Colonic mucosa (tissue), 4 donors: ENCODE measurements at regions of chr17 and their contacts with region 1.

Region 1: DNA sequence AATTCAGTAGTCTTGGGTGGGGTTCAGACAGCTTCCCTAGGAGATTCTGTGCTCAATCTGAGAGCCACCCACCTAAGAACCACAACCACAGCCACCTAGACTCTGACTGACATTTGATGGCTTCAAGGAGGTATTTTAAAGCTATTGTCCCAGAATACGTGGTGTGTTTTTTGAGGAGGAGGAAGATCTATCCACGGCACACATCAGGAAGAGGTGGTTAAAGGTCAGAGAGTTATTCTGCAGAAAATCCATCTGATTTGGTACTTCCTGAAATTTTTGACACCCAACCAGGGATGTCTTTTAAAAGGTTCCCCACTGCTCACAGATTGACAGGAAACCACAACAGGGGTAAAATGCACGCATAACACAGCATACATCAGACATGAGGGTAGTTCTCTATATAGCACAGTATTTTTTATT is 25.1 kb downstream of the SMARCE1 start:
- DNase-seq: no peak
- H3K4me3 ChIP-seq: no peak overlapping the region
- H3K27ac ChIP-seq: no peak overlapping the region
- H3K4me1 ChIP-seq: peaks cover 7% of the 10 kb centered on the region
- H3K27me3 ChIP-seq: no peaks in the 10 kb centered on the region
- CTCF ChIP-seq: no peak

Region 2: GRCh38 chr17:40714473-40714872 is 92.0 kb after region 1 on chr17:
- intact Hi-C with region 1: no loop called
- DNase-seq: no peak
- H3K4me3 ChIP-seq: no peak overlapping the region
- H3K27ac ChIP-seq: no peak overlapping the region
- H3K4me1 ChIP-seq: no peaks in the 10 kb centered on the region
- H3K27me3 ChIP-seq: no peaks in the 10 kb centered on the region
- CTCF ChIP-seq: no peak

Region 3: GRCh38 chr17:40726919-40727318 is 104.4 kb after region 1 on chr17:
- intact Hi-C with region 1: loop called (anchors 10 kb)
- DNase-seq: no peak
- H3K4me3 ChIP-seq: no peak overlapping the region
- H3K27ac ChIP-seq: no peak overlapping the region
- H3K4me1 ChIP-seq: no peaks in the 10 kb centered on the region
- H3K27me3 ChIP-seq: no peaks in the 10 kb centered on the region
- CTCF ChIP-seq: no peak